Heart right ventricle (tissue), 16 donors: ENCODE measurements at regions of chr5 and their contacts with region 1.

Region 1: GRCh38 chr5:16489322-16489791 is 23.8 kb upstream of the ZNF622 start:
- DNase-seq: no peak
- ATAC-seq: peak; percentile 62 to 83 (median 70)
- H3K4me3 ChIP-seq: no peak overlapping the region
- H3K27ac ChIP-seq: peak overlapping the region in 7 of 10 donors; percentile 67 to 89 (median 79)
- H3K4me1 ChIP-seq: peaks cover 0 to 67% (median 25%) of the 10 kb centered on the region in 9 donors
- H3K27me3 ChIP-seq: no peaks in the 10 kb centered on the region
- CTCF ChIP-seq: peak; percentile 21 to 79 (median 66)

Region 2: DNA sequence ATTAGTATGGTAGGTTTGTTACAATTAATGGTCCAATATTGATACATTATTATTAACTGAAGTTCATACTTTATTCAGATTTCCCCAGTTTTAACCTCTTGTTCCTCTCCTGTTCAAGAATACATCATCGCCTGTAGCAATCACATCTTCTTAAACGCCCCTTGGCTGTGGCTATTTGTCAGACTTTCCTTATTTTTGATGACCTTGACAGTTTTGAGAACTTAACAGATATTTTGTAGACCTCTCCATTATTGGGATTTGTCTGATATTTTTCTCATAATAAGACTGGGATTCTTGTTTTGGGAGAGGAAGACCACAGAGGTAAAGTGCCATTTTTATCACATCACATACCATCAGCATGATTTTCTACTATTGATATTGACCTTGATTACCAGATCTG is 197.5 kb before region 1 on chr5:
- intact Hi-C with region 1: no loop called
- DNase-seq: no peak
- ATAC-seq: no peak
- H3K4me3 ChIP-seq: no peak overlapping the region
- H3K27ac ChIP-seq: no peak overlapping the region
- H3K4me1 ChIP-seq: no peaks in the 10 kb centered on the region
- H3K27me3 ChIP-seq: no peaks in the 10 kb centered on the region
- CTCF ChIP-seq: no peak

Region 3: GRCh38 chr5:16539169-16539721 is 49.9 kb after region 1 on chr5:
- intact Hi-C with region 1: loop called in 2 of 10 experiments (anchors 2 to 5 kb)
- DNase-seq: peak; percentile 73 to 75
- ATAC-seq: peak; percentile 85 to 96 (median 92)
- H3K4me3 ChIP-seq: no peak overlapping the region
- H3K27ac ChIP-seq: peak overlapping the region; percentile 51 to 94 (median 88)
- H3K4me1 ChIP-seq: peaks cover 3 to 57% (median 33%) of the 10 kb centered on the region in 9 donors
- H3K27me3 ChIP-seq: no peaks in the 10 kb centered on the region
- CTCF ChIP-seq: no peak

Region 4: GRCh38 chr5:16552666-16553343 is 63.4 kb after region 1 on chr5:
- intact Hi-C with region 1: loop called in 9 of 10 experiments (anchors 2 to 10 kb)
- DNase-seq: peak; percentile 74 to 75
- ATAC-seq: peak; percentile 81 to 93 (median 87)
- H3K4me3 ChIP-seq: no peak overlapping the region
- H3K27ac ChIP-seq: peak overlapping the region in 7 of 10 donors; percentile 9 to 57 (median 34)
- H3K4me1 ChIP-seq: peaks cover 0 to 31% (median 5%) of the 10 kb centered on the region in 9 donors
- H3K27me3 ChIP-seq: no peaks in the 10 kb centered on the region
- CTCF ChIP-seq: peak; percentile 56 to 85 (median 78)

Region 5: DNA sequence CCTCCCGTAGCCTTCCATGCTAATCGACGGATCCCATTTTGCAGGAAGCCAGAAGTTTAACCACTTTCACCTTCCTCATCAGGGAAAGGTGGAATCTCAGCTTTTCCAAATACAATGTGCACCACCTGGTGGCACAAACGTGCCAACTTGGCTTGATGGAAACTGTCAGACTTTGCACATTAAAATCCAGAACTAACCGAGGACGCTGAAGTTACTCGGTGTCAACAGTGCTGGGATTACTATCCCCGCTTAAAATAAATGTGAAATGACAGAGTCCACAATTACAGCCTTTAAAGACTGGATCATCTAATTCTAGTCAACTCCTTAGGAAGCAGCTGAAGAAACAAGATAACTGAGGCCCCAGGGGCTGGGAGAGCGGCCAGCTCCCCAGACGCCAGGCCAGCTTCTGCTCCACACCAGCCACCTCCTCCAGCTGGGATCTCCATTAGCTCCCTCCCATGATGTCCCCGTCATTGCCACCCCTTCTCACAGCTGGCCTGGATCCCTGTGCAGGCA is 177.6 kb after region 1 on chr5:
- intact Hi-C with region 1: loop called in 8 of 10 experiments (anchors 5 to 10 kb)
- DNase-seq: peak; percentile 58 to 60
- ATAC-seq: peak; percentile 73 to 91 (median 80)
- H3K4me3 ChIP-seq: peak overlapping the region in 3 of 10 donors; percentile 11 to 17 (median 15)
- H3K27ac ChIP-seq: peak overlapping the region in 8 of 10 donors; percentile 23 to 74 (median 52)
- H3K4me1 ChIP-seq: peaks cover 0 to 44% (median 26%) of the 10 kb centered on the region in 9 donors
- H3K27me3 ChIP-seq: no peaks in the 10 kb centered on the region
- CTCF ChIP-seq: peak; percentile 19 to 62 (median 45)

Region 6: DNA sequence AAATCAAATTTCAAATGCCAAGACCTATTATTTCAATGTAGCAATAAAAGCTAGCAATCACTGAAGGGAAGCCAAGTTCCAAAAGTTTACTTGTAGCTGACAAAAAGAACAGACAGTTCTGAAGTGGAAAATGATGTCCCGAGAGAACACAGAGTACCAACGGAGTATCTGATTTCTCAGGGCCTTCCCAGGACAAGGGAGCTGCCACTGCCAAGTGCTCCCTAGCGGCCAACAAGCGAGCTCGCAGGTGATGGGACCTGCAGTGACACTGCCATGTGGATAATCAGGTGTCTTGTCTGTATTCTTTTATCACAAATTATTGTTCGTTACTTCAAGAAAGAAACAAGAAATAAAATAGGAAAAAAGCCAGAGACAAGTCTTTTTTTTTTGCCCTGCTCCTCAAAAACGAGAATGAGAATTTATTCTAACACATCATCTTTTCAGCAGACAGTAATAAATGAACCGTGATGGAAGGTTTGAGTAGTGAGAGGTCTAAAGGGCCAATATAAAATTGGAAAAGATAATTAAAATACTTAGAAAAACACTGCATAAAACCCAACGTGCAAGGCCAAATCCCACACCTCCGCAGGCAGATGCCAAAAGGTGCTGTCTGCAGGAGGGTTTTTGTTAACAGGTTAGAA is 287.4 kb after region 1 on chr5:
- intact Hi-C with region 1: loop called in 1 of 10 experiments (anchors 10 kb)
- DNase-seq: peak; percentile 8 to 26
- ATAC-seq: peak in 6 of 8 donors; percentile 55 to 93 (median 75)
- H3K4me3 ChIP-seq: no peak overlapping the region
- H3K27ac ChIP-seq: no peak overlapping the region
- H3K4me1 ChIP-seq: peaks cover 0 to 6% (median 0%) of the 10 kb centered on the region in 9 donors
- H3K27me3 ChIP-seq: no peaks in the 10 kb centered on the region
- CTCF ChIP-seq: peak in 7 of 9 donors; percentile 16 to 52 (median 29)

Region 7: GRCh38 chr5:17132444-17133083 is 643.2 kb after region 1 on chr5:
- intact Hi-C with region 1: loop called in 1 of 10 experiments (anchors 10 kb)
- DNase-seq: no peak
- ATAC-seq: no peak
- H3K4me3 ChIP-seq: no peak overlapping the region
- H3K27ac ChIP-seq: no peak overlapping the region
- H3K4me1 ChIP-seq: peaks cover 0 to 20% (median 0%) of the 10 kb centered on the region in 9 donors
- H3K27me3 ChIP-seq: peaks cover 0 to 12% (median 0%) of the 10 kb centered on the region in 7 donors
- CTCF ChIP-seq: peak; percentile 56 to 80 (median 73)

Region 8: DNA sequence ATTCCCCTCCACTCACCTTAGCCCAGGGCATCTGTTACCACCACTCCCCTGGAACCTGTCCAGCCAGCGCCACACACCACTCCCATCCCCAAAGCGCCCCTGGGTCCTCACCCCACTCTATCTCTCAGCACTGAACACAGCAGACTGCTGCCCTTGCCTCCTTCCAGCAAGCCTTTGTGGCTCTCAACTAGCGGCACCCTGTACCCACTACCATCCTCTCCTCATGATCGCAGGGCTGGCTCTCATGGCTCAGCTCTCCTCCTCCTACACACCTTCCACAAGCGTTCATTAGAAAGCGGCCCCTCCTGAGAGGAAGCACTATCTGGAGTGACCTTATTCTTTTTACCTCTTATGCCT is 714.8 kb after region 1 on chr5:
- intact Hi-C with region 1: loop called in 4 of 10 experiments (anchors 5 to 10 kb)
- DNase-seq: no peak
- ATAC-seq: no peak
- H3K4me3 ChIP-seq: no peak overlapping the region
- H3K27ac ChIP-seq: no peak overlapping the region
- H3K4me1 ChIP-seq: no peaks in the 10 kb centered on the region
- H3K27me3 ChIP-seq: peaks cover 0 to 79% (median 30%) of the 10 kb centered on the region in 7 donors
- CTCF ChIP-seq: no peak